AG04450 (cell line): ENCODE measurements at regions of chr2 and their contacts with region 1.

Region 1: DNA sequence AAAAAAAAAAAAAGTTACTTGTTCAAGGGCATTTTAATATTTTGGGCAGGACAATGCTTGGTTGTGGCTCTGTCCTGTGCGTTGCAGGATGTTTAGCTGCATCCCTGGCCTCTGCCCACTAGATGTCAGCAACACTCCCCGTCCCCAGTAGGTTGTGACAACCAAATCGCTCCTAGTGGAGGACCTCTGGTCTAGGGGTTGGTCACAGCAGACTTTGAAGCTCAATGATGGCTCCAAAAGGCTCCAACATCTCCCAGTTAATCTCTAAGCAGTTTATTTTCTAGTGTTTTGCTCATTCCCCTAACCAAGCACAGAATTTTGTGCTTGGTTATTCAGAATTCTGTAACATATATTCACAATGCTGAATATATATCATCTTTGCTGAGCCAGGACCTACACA is 67.0 kb downstream of the CHRNA1 start:
- DNase-seq: no peak
- H3K4me3 ChIP-seq: no peak overlapping the region
- H3K27ac ChIP-seq: no peak overlapping the region
- H3K27me3 ChIP-seq: peaks cover 15% of the 10 kb centered on the region
- CTCF ChIP-seq: peak; percentile 93

Region 2: GRCh38 chr2:174561283-174561971 is 135.8 kb before region 1 on chr2:
- CTCF ChIA-PET with region 1: no interaction called
- POLR2A ChIA-PET with region 1: no interaction called
- DNase-seq: peak; percentile 16
- H3K4me3 ChIP-seq: no peak overlapping the region
- H3K27ac ChIP-seq: no peak overlapping the region
- H3K27me3 ChIP-seq: no peaks in the 10 kb centered on the region
- CTCF ChIP-seq: no peak

Region 3: GRCh38 chr2:174577967-174578589 is 119.2 kb before region 1 on chr2:
- CTCF ChIA-PET with region 1: interaction called, 21 read pairs
- POLR2A ChIA-PET with region 1: no interaction called
- DNase-seq: peak; percentile 26
- H3K4me3 ChIP-seq: no peak overlapping the region
- H3K27ac ChIP-seq: no peak overlapping the region
- H3K27me3 ChIP-seq: no peaks in the 10 kb centered on the region
- CTCF ChIP-seq: peak; percentile 67

Region 4: DNA sequence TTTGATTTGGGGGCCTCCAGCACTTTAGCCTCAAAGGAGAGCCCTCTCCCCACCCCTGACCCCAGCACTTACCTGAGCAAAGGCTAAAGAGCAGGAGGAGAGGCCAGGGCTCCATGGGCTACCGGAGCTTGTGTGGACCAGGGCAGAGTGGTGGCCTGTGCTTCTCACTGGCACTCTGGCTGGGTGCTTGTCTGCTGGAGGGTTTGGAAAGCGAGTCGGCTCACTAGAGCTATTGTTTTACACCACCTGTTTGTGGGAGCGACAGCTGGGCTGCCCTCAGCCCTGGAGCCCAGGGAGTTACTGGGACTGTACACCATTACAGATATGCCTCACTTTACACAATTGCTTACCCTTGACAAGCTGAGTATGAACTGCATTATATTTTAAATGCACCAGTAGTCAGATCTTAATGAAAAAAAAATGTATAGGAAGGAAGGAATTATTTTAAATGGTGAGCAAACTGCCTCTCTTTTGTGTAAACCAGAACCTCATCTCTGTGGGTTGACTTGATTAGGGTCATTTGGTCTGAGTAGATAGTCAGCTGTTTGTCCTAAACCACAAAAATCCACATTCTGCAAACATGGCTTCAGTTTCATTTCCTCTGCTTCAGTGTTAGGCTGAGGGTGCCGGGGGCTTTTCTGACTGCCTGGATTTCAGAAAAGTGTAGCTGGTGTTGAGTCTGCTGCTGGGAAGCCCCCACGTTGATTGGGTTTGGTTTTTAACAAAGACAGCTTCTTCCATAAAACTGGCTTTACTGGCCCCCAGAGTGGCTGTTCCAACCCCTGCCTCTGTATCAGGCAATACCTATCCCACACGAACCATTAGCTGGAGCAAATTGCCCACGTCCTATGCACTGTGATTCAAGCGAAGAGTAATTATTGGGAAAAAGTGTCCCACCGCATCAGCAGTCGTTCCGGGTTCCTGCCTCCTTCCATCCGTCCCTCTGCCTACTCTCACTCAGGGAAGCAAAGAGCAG is 67.3 kb after region 1 on chr2 and contains the start of gene CHRNA1:
- CTCF ChIA-PET with region 1: interaction called, 11 read pairs
- POLR2A ChIA-PET with region 1: no interaction called
- DNase-seq: no peak
- H3K4me3 ChIP-seq: no peak within 1 kb of the TSS
- H3K27ac ChIP-seq: peak within 1 kb of the TSS; percentile 82
- H3K27me3 ChIP-seq: no peaks in the 10 kb centered on the region
- CTCF ChIP-seq: no peak
- polyA plus RNA-seq, gene CHRNA1: 2.6 and 2.7 TPM in 2 replicates

Region 5: DNA sequence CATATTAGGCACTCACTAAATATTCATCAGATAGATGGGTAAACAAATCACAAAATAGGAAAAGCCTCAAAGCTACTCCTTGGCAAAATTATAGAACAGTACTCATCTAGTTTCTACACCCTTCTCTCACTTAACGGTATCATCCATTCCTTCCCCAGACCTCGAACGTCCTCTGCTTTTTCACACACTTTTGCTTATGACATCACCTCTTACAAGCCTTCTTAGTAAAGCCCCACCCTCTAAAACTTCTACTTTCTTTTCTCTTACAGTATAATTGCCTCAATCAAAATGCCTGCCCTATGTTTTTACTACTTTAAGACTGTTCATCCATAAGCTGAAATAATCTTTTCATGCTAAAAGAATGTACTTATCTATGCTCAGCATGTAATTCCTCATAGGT is 299.9 kb after region 1 on chr2:
- CTCF ChIA-PET with region 1: interaction called, 128 read pairs
- POLR2A ChIA-PET with region 1: no interaction called
- DNase-seq: no peak
- H3K4me3 ChIP-seq: no peak overlapping the region
- H3K27ac ChIP-seq: no peak overlapping the region
- H3K27me3 ChIP-seq: no peaks in the 10 kb centered on the region
- CTCF ChIP-seq: no peak

Region 6: DNA sequence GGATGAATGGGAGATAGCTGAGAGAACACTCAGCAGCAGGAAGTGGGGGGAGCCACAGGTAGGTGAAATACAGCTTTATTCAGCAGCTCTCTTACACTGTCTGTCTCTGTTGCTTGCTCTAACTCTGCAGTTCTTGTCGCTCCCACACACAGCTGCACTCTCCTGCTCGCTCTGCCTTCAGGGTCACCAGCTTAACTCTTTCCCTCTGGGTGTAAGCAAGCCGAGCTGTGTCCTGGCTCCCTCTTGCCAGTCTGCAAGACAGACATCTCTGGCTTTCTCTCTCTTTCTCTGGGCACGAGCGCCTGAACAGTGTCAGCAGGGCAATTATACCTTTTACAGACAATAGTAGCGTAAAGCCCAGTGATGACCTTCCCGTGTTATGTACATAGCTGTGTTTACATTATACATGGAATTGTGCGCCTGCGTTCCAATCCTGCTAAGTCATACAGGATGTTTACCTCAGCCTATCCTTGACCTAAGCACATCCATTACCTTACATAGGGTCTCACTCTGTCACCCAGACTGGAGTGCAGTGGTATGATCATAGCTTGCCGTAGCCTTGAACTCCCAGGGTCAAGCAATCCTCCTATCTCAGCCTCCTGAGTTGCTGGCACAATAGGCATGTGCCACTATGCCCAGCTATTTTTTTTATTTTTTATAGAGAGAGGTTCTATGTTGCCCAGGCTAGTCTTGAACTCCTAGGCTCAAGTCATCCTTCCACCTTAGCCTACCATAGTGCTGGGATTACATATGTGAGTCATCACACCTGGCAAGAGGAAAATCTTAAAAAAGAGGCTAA is 365.7 kb after region 1 on chr2:
- CTCF ChIA-PET with region 1: interaction called, 10 read pairs
- POLR2A ChIA-PET with region 1: no interaction called
- DNase-seq: no peak
- H3K4me3 ChIP-seq: no peak overlapping the region
- H3K27ac ChIP-seq: no peak overlapping the region
- H3K27me3 ChIP-seq: no peaks in the 10 kb centered on the region
- CTCF ChIP-seq: no peak

Region 7: GRCh38 chr2:175251425-175252041 is 554.3 kb after region 1 on chr2:
- CTCF ChIA-PET with region 1: interaction called, 10 read pairs
- POLR2A ChIA-PET with region 1: no interaction called
- DNase-seq: no peak
- H3K4me3 ChIP-seq: no peak overlapping the region
- H3K27ac ChIP-seq: no peak overlapping the region
- H3K27me3 ChIP-seq: peaks cover 14% of the 10 kb centered on the region
- CTCF ChIP-seq: peak; percentile 76